Activated T-helper 1 cell treated with anti-CD3 and anti-CD28 coated beads, Interleukin-12 subunit alpha, Interleukin-12 subunit beta, Interleukin-2, Interleukin-4 antibody, amounts not matched to agents 30 ng/mL and 10 ng/mL and 1 ng/mL, durations not matched to agents 14 hours and 24 hours and 36 hours (primary cell): ENCODE measurements at regions of chr6 and their contacts with region 1.

Region 1: DNA sequence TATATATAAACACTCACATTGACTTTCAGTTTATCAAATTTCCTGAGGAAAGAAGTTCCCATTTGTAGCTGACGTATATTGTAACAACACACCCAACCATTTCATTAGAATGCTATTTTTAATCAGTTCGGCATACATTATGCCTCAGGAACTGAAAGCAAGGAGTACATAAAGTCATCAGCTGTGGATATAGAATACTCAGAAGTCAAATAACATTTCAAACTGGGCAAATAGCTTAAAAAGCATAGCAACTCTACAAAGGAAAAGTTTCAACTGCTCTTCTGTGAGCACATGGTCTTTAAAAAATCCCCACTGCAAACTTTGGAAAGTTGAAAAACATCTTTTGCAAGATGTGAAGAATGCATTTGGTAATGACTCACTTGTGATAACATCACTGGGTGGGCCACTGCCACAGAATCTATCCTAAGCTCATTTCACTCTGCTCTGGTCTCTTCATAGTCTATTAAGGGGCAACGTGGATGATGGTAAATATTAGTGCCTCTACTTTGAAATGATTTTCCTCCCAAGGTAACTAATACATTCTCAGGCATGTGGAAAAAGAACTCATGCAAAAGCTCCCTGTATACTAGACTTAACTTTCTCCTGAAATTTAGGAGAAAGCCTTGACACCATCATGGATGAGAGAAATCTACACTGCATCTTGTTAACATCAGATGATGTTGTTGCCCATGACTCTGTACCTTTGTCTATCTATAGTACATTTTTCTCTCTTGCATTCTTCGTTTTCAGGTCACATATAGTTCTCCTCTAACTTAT is 49.2 kb downstream of the FYN start:
- DNase-seq: no peak
- H3K4me3 Mint-ChIP-seq: peak overlapping the region; percentile 72
- H3K27ac Mint-ChIP-seq: peak overlapping the region; percentile 89
- H3K4me1 Mint-ChIP-seq: peaks cover 81% of the 10 kb centered on the region
- H3K27me3 Mint-ChIP-seq: no peaks in the 10 kb centered on the region

Region 2: DNA sequence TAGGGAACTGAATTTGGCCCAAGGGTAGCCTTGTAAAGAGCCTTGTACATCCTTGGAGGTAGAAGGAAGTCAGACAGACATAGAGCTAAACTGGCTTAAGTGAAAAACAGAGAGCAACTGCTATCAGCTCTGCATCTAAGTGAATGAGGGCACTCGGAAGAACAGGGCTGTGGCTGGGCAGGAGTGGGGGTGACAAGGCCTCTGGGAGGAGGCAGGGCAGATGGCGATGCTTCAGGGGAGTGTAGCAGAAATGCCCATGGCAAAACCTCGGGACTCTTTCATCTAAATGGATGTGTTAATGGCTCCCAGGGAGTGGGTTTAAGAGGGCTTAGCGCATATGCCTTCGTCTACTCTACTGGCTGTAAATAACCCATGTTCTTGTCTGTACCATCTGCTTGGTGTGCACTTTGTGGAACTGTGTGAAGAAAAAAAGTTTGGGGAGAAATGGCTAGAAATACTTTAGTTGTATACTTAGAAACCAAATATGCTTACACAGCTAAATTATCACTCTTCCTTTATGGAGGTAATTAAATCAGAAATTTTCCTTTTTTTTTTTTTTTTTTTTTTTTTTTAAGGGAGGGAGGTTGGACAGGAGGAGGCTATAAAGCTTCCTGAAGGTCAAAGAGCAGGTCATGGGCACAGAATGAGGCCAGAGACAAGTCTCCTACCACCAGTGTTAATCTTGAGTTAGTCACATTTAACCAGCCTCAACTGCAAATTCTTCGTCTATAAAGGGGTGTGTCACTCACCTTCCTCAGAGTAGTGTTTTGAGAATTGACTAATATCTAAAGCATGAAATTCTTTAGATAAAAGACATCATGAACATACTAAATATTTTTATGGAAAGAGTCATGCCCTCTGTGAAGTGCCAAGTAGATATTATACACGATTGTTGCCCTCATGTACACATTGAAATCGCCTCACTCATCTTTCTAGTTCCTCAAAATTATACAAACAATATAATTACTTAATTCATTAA is 11.7 kb before region 1 on chr6:
- intact Hi-C with region 1: loop called (anchors 1 kb)
- DNase-seq: no peak
- H3K4me3 Mint-ChIP-seq: peak overlapping the region; percentile 32
- H3K27ac Mint-ChIP-seq: peak overlapping the region; percentile 95
- H3K4me1 Mint-ChIP-seq: peaks cover 74% of the 10 kb centered on the region
- H3K27me3 Mint-ChIP-seq: no peaks in the 10 kb centered on the region